CD8-positive, alpha-beta T cell (primary cell): ENCODE measurements at regions of chr5 and their contacts with region 1.

Region 1: DNA sequence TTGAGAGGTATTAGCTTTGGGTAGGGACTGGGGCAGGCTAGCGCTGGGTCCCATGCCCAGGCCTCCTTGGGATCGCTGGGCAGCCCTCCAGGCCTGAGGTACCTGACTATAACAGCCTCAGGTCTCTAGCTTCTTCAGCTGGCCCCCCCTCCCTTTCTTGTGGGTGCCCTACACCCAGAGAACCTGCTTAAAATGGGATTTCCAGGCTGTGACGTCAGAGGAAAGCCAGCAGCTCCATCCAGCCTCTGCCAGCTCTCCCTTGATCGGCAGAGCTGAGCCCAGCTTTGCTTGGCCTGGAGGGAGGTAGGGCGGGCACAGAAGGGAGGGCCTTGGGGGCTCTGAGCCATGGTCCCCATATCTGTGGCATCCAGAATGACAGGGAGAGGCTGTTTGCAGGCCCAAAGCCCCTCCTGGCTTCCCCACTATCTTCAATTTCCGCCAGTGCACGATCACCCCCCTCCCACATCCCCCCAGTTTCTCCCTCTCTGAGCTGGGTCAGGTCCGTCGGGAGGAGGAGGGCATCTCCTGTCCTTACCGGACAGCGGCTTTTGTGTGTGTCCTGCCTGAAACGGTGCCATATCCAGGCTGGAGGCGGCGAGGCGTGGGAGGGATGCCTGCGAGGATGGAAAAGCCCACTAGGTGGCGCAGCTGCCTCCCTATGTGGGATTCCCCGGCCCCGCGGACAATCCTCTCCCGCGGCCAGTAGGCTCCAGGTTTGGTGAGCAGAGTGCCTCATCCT is 10.8 kb downstream of the REEP2 start:
- DNase-seq: peak; percentile 48 to 84 (median 78)
- ATAC-seq: peak; percentile 92
- H3K4me3 ChIP-seq: no peak overlapping the region
- H3K4me3 Mint-ChIP-seq: peak overlapping the region; percentile 15
- H3K27ac ChIP-seq: no peak overlapping the region
- H3K27ac Mint-ChIP-seq: no peak overlapping the region
- H3K4me1 ChIP-seq: peaks cover 7% of the 10 kb centered on the region
- H3K4me1 Mint-ChIP-seq: peaks cover 5% of the 10 kb centered on the region
- H3K27me3 ChIP-seq: no peaks in the 10 kb centered on the region
- H3K27me3 Mint-ChIP-seq: no peaks in the 10 kb centered on the region
- CTCF ChIP-seq: peak; percentile 96

Region 2: DNA sequence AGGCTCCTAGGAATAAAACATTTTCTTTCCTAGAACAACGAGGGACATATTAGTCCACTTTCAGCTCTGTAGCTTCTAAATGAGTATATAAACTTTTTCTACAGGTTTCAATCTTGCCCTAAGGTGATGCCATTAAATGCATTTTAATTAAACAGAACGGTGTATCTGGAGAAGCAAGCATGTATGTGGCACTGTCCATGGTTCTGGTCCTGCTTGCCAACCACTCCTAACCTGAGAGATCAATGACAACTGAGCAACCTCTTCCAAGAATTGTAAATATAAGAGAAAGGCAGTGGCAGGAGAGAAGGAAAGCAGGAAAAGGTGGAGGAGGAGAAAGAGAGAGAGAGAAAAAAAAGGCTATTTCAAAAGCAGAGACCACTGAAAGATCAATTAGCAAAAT is 855.0 kb before region 1 on chr5:
- CTCF ChIA-PET with region 1: no interaction called
- POLR2A ChIA-PET with region 1: no interaction called
- intact Hi-C with region 1: no loop called
- DNase-seq: no peak
- ATAC-seq: no peak
- H3K4me3 ChIP-seq: no peak overlapping the region
- H3K4me3 Mint-ChIP-seq: no peak overlapping the region
- H3K27ac ChIP-seq: no peak overlapping the region
- H3K27ac Mint-ChIP-seq: no peak overlapping the region
- H3K4me1 ChIP-seq: no peaks in the 10 kb centered on the region
- H3K4me1 Mint-ChIP-seq: no peaks in the 10 kb centered on the region
- H3K27me3 ChIP-seq: peaks cover 0 to 2% of the 10 kb centered on the region in 2 experiments
- H3K27me3 Mint-ChIP-seq: peaks cover 34% of the 10 kb centered on the region
- CTCF ChIP-seq: no peak

Region 3: GRCh38 chr5:138258704-138259292 is 190.9 kb before region 1 on chr5:
- CTCF ChIA-PET with region 1: no interaction called
- POLR2A ChIA-PET with region 1: no interaction called
- intact Hi-C with region 1: no loop called
- DNase-seq: no peak
- ATAC-seq: no peak
- H3K4me3 ChIP-seq: no peak overlapping the region
- H3K4me3 Mint-ChIP-seq: no peak overlapping the region
- H3K27ac ChIP-seq: no peak overlapping the region
- H3K27ac Mint-ChIP-seq: no peak overlapping the region
- H3K4me1 ChIP-seq: no peaks in the 10 kb centered on the region
- H3K4me1 Mint-ChIP-seq: no peaks in the 10 kb centered on the region
- H3K27me3 ChIP-seq: no peaks in the 10 kb centered on the region
- H3K27me3 Mint-ChIP-seq: peaks cover 2% of the 10 kb centered on the region
- CTCF ChIP-seq: no peak

Region 4: DNA sequence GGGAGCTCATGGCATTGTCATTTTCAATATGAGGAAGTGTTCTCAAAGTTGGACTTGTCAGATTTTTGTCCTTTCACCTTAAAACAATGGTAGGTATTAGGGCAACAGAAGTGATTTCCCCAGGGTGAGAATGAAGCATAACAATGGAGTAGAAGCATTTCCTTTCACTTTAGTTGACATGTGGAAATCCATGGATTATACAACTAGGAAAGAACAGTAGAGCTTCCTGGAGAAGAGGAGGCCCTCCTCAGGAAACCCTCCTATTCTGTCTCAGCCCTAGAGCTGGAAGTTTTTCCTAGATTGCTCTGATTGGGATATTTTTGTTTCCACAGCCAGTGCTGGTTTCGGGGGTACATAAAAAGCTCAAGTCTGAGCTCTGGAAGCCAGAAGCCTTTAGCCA is 24.6 kb before region 1 on chr5:
- CTCF ChIA-PET with region 1: interaction called, 12 read pairs
- POLR2A ChIA-PET with region 1: no interaction called
- intact Hi-C with region 1: no loop called
- DNase-seq: no peak
- ATAC-seq: no peak
- H3K4me3 ChIP-seq: no peak overlapping the region
- H3K4me3 Mint-ChIP-seq: no peak overlapping the region
- H3K27ac ChIP-seq: no peak overlapping the region
- H3K27ac Mint-ChIP-seq: no peak overlapping the region
- H3K4me1 ChIP-seq: no peaks in the 10 kb centered on the region
- H3K4me1 Mint-ChIP-seq: no peaks in the 10 kb centered on the region
- H3K27me3 ChIP-seq: no peaks in the 10 kb centered on the region
- H3K27me3 Mint-ChIP-seq: no peaks in the 10 kb centered on the region
- CTCF ChIP-seq: no peak

Region 5: GRCh38 chr5:138464008-138464387 is 14.3 kb after region 1 on chr5:
- CTCF ChIA-PET with region 1: interaction called, 100 read pairs
- POLR2A ChIA-PET with region 1: interaction called, 9 read pairs
- intact Hi-C with region 1: loop called in 1 of 2 experiments (anchors 1 kb)
- DNase-seq: peak; percentile 85 to 98 (median 93)
- ATAC-seq: peak; percentile 47
- H3K4me3 ChIP-seq: peak overlapping the region; percentile 91 to 97
- H3K4me3 Mint-ChIP-seq: peak overlapping the region; percentile 91
- H3K27ac ChIP-seq: peak overlapping the region; percentile 79 to 100
- H3K27ac Mint-ChIP-seq: peak overlapping the region; percentile 93
- H3K4me1 ChIP-seq: peaks cover 51% of the 10 kb centered on the region
- H3K4me1 Mint-ChIP-seq: peaks cover 48% of the 10 kb centered on the region
- H3K27me3 ChIP-seq: no peaks in the 10 kb centered on the region
- H3K27me3 Mint-ChIP-seq: no peaks in the 10 kb centered on the region
- CTCF ChIP-seq: peak; percentile 87

Region 6: DNA sequence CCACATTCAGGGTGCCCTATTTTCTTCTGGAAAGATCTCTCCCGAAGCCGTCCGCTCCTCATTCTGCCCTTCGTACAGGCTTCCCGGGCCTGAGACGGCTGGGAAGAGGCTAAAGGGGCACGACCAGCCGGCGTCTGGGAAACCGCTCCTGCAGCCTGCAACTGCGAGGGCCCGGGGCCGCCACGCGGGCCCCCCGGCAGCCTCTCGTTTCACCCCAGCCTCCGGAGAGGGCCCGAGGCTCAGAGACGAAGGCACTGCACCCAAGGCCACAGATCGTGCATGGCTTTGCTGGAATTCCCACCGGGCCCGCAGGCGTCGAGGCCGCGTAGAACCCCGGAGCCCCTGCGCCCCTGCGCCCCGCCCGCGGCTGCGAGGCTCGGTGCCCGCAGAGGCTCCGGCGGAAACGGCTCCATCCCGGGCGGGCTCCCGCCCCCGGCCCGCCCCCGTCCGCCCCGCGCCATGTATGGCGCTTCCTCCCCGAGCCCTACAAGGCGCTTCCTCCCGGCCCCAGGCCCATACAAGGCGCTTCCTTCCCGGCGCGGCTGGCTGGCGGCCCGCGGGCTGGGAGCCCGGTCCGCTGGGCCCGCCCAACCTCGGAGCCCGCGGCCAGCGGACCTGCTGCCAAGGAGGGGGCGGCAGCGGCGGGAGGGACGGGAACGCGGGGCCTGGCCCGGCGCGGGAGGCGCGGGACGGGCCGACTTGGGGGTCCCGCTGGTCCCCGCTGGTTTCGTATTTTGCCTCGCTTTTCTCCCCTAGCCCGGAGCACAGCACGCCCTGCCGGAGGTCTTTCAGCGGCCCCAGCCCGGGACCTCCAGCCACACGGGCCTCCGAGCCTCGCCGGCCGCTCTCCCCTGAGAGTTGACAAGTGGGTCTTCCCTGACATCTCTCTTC is 42.2 kb after region 1 on chr5:
- CTCF ChIA-PET with region 1: interaction called, 291 read pairs
- POLR2A ChIA-PET with region 1: no interaction called
- intact Hi-C with region 1: no loop called
- DNase-seq: peak; percentile 72 to 94 (median 84)
- ATAC-seq: peak; percentile 98
- H3K4me3 ChIP-seq: peak overlapping the region; percentile 42 to 63
- H3K4me3 Mint-ChIP-seq: peak overlapping the region; percentile 93
- H3K27ac ChIP-seq: no peak overlapping the region
- H3K27ac Mint-ChIP-seq: no peak overlapping the region
- H3K4me1 ChIP-seq: peaks cover 19% of the 10 kb centered on the region
- H3K4me1 Mint-ChIP-seq: peaks cover 16% of the 10 kb centered on the region
- H3K27me3 ChIP-seq: peaks cover 0 to 15% of the 10 kb centered on the region in 2 experiments
- H3K27me3 Mint-ChIP-seq: peaks cover 18% of the 10 kb centered on the region
- CTCF ChIP-seq: no peak

Region 7: DNA sequence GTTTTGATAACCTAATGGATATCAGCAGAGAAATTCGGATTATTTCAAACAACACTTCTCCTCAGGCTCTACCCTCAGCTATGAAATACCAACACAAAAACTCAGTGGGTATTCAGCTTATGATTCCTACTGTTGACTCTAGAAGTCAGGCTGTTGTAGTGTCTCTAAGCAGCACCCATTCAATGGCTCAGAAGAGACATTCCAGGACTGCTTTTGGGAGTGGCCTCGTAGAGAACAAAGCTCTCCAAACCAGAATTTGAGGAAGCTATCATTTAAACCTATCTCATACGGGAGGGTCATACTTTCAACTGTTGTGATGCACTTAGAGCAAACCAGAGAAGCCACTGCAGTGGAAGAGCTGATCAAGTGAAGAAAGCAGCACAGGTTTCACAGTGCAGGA is 59.3 kb after region 1 on chr5:
- CTCF ChIA-PET with region 1: interaction called, 291 read pairs
- POLR2A ChIA-PET with region 1: no interaction called
- intact Hi-C with region 1: no loop called
- DNase-seq: no peak
- ATAC-seq: no peak
- H3K4me3 ChIP-seq: no peak overlapping the region
- H3K4me3 Mint-ChIP-seq: no peak overlapping the region
- H3K27ac ChIP-seq: no peak overlapping the region
- H3K27ac Mint-ChIP-seq: no peak overlapping the region
- H3K4me1 ChIP-seq: no peaks in the 10 kb centered on the region
- H3K4me1 Mint-ChIP-seq: no peaks in the 10 kb centered on the region
- H3K27me3 ChIP-seq: no peaks in the 10 kb centered on the region
- H3K27me3 Mint-ChIP-seq: no peaks in the 10 kb centered on the region
- CTCF ChIP-seq: no peak

Region 8: DNA sequence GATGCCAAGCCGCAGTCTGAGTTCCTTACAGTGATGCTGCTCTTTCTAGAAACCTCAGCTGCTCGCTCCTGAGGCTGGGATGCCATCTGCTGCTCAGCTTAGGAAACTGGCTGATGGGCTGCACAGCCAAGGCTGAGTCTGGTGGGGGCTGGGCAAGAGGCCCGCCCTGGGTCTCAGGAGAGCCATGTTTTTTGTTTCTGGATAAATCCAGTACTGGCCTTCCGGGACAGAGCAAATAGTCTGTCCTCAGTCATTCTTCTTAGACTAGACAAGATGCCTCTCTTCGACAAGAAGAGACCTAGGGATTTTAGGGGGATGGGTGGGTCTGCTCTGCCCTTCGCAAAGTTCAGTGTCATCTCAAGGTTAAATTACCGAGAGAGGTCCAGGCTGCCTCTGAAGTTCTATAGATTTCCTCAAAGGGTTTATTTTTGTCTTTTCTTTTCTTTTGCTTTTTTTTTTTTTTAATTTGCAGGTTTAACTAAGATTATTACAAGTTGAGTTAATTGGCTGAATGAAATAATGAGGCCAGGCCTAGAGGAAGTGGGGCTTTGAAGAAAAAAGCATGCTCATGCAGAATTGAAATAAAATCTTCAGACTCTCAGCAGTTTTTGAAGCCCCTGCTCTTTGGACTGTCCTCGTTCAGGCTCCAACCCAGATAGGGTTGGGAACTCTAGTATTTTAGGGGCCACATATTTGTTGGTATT is 813.2 kb after region 1 on chr5:
- CTCF ChIA-PET with region 1: interaction called, 3 read pairs
- POLR2A ChIA-PET with region 1: no interaction called
- intact Hi-C with region 1: loop called in 1 of 2 experiments (anchors 1 kb)
- DNase-seq: peak; percentile 37 to 80 (median 65)
- ATAC-seq: peak; percentile 99
- H3K4me3 ChIP-seq: no peak overlapping the region
- H3K4me3 Mint-ChIP-seq: no peak overlapping the region
- H3K27ac ChIP-seq: no peak overlapping the region
- H3K27ac Mint-ChIP-seq: no peak overlapping the region
- H3K4me1 ChIP-seq: peaks cover 13% of the 10 kb centered on the region
- H3K4me1 Mint-ChIP-seq: peaks cover 15% of the 10 kb centered on the region
- H3K27me3 ChIP-seq: no peaks in the 10 kb centered on the region
- H3K27me3 Mint-ChIP-seq: peaks cover 3% of the 10 kb centered on the region
- CTCF ChIP-seq: peak; percentile 56